B cell (primary cell): ENCODE measurements at regions of chr20 and their contacts with region 1.

Region 1: DNA sequence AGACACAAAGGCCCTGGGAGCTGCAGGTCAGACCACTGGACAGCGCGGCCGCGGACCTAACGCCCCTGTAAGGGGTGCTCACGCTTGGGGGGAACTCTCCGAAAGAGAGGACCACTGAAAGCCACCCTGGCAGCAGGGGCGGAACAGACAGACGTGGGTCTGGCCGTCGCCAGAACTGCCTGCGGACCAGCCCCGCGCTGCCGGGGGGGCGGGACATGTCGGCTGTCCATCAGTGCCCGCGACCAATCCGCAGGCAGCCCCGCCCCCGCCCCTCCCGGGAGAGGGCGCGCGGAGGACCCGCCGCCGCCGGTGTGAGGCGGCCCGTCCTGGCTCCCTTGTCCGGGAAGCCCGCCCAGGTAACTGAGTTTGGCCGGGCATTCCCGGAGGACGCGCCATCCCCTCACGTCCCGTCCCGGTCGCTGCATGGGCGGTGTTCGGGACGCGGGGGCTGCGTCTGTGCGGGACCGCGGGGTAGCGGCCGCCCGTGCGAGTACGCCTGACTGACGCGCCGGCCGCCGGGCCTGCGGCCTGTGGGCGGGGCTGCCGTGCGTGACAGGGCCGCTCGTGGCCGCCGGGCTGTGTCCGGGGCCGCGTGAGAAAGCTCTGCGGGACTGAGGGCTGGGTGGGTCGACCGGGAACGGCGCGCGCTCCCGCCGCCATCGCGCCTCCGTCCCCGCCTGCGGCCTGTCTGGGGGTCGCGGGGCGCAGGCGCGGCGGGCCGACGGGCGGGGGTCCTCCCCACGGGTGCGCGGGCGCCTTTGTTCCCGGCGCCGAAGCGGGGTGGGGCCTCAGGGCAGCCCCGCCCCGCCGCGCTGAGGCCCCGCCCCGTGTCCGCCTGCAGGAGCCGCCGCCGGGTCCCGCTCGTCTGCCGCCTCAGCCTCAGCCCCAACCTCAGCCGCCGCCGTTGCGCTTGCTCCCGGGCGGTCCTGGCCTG is at the start of gene PLCG1:
- DNase-seq: peak; percentile 89
- ATAC-seq: peak; percentile 75
- H3K4me3 ChIP-seq: peak within 1 kb of the TSS; percentile 7 to 83 (median 71)
- H3K4me3 Mint-ChIP-seq: peak within 1 kb of the TSS; percentile 93
- H3K27ac ChIP-seq: peak within 1 kb of the TSS; percentile 45 to 73
- H3K27ac Mint-ChIP-seq: peak within 1 kb of the TSS; percentile 91
- H3K4me1 ChIP-seq: peaks cover 43 to 62% of the 10 kb centered on the region in 2 donors
- H3K4me1 Mint-ChIP-seq: peaks cover 66% of the 10 kb centered on the region
- H3K27me3 ChIP-seq: no peaks in the 10 kb centered on the region
- H3K27me3 Mint-ChIP-seq: no peaks in the 10 kb centered on the region
- CTCF ChIP-seq: no peak
- total RNA-seq, gene PLCG1: 98.7 and 106 TPM in 2 replicates

Region 2: GRCh38 chr20:41149679-41150131 is 12.8 kb after region 1 on chr20:
- CTCF ChIA-PET with region 1: interaction called, 122 read pairs
- POLR2A ChIA-PET with region 1: interaction called, 7 read pairs
- intact Hi-C with region 1: no loop called
- DNase-seq: no peak
- ATAC-seq: no peak
- H3K4me3 ChIP-seq: no peak overlapping the region
- H3K4me3 Mint-ChIP-seq: no peak overlapping the region
- H3K27ac ChIP-seq: no peak overlapping the region
- H3K27ac Mint-ChIP-seq: no peak overlapping the region
- H3K4me1 ChIP-seq: peaks cover 28 to 38% of the 10 kb centered on the region in 2 donors
- H3K4me1 Mint-ChIP-seq: peaks cover 69% of the 10 kb centered on the region
- H3K27me3 ChIP-seq: no peaks in the 10 kb centered on the region
- H3K27me3 Mint-ChIP-seq: no peaks in the 10 kb centered on the region
- CTCF ChIP-seq: no peak

Region 3: DNA sequence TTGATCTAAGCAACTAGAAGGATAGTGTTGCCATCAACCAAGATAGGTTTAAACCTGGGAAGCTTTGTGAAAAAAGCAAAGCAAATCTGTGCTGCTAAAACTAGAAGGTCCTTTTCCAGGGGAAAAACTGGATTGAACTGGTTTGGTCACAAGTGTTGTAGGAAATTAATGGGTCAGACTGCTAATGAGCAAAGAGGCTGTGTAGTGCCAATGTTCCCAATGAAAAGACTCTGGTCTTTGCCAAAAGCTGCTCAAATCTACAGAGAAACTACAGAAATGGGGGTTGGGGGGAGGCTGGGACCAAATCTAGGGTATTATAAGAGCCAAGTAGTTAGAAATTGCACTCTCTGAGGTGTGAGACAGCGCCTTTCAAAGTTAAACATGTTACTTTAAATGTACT is 85.3 kb after region 1 on chr20:
- CTCF ChIA-PET with region 1: interaction called, 16 read pairs
- POLR2A ChIA-PET with region 1: no interaction called
- intact Hi-C with region 1: no loop called
- DNase-seq: no peak
- ATAC-seq: no peak
- H3K4me3 ChIP-seq: no peak overlapping the region
- H3K4me3 Mint-ChIP-seq: no peak overlapping the region
- H3K27ac ChIP-seq: no peak overlapping the region
- H3K27ac Mint-ChIP-seq: no peak overlapping the region
- H3K4me1 ChIP-seq: no peaks in the 10 kb centered on the region
- H3K4me1 Mint-ChIP-seq: peaks cover 4% of the 10 kb centered on the region
- H3K27me3 ChIP-seq: no peaks in the 10 kb centered on the region
- H3K27me3 Mint-ChIP-seq: no peaks in the 10 kb centered on the region
- CTCF ChIP-seq: no peak

Region 4: DNA sequence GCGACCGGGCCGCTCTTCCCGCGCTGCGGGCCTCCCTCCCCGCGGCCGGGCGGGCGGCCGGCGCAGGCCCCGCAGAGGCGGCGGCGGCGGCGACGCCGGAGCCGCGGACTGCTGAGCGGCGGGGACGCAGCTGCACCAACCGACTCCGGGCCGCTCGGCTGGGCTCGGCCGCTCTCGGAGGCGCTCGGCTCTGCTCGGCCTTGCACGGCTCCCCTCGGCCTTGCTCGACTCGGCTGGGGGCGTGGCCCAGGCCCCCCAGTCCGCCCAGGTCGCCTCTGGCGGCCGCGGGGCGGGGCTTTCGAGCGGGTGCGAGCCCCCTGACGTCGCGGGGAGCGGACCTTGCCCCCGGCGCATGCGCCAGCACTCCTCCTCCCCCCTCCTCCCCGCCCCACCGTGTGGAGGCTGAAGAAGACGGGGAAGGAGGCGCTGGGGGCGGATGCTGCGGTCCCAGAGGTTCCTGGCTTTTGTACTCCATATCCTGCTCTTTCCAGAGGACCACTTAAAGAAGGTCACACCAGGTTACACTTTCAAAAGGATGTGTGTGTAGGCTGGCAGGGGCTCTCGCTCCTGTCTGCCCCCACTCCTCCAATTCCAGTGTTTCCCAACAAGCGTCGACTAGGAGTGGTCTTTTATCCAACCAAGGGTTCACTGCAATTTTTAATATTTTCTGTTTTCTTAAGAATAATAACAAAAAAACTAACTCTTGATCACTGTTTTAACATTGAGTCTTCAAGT is 180.8 kb after region 1 on chr20 and contains the start of gene ZHX3:
- CTCF ChIA-PET with region 1: interaction called, 6 read pairs
- POLR2A ChIA-PET with region 1: interaction called, 5 read pairs
- intact Hi-C with region 1: loop called (anchors 1 kb)
- DNase-seq: peak; percentile 98
- ATAC-seq: peak; percentile 95
- H3K4me3 ChIP-seq: peak within 1 kb of the TSS in 4 of 5 experiments; percentile 65 to 86 (median 74)
- H3K4me3 Mint-ChIP-seq: peak within 1 kb of the TSS; percentile 91
- H3K27ac ChIP-seq: peak within 1 kb of the TSS; percentile 63 to 76
- H3K27ac Mint-ChIP-seq: peak within 1 kb of the TSS; percentile 91
- H3K4me1 ChIP-seq: peaks cover 11 to 12% of the 10 kb centered on the region in 2 donors
- H3K4me1 Mint-ChIP-seq: peaks cover 22% of the 10 kb centered on the region
- H3K27me3 ChIP-seq: no peaks in the 10 kb centered on the region
- H3K27me3 Mint-ChIP-seq: no peaks in the 10 kb centered on the region
- CTCF ChIP-seq: no peak
- total RNA-seq, gene ZHX3: 22.2 and 24.4 TPM in 2 replicates

Region 5: DNA sequence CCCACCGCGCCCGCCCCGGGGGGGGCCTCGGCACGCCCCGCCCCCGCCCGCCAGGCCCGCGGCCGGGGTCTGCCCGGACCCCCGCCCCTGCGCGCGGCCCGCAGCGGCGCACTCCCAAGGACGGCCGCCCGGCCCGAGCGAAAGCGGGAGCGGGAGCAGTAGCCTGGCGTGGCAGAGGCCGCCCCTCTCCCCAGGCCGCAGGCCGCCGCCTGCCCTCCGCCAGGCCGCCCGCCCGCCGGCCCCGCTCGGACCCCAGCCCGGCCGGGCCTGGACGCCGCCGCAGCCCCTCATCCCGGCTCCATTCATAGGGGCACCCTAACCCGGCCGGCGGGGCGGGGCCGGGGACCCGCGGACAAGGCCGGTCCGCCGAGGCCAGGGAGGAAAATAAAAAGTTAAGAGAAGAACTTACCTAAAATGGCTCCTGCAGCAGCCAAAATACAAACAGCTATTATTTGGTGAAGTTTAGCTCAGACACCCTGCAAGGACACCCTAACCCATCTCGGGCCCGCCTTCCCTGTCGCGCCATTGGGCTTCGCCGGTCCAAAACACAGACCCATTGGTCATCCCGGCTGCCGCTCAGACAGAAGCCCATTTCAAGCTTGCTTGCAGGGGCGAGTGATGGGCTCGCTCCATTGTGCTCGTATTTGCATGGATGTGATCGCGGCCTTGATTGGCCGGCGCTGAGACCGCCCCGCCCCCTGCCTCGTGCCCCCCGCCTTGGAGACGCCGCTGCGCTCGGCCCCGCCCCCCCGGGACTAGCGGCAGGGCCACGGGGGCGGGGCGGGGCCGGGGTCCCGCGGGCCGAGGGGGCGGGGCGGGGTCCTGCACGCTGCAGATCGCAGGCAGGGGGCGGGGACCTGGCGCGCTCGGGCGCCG is 481.2 kb after region 1 on chr20 and contains the start of gene CHD6:
- CTCF ChIA-PET with region 1: no interaction called
- POLR2A ChIA-PET with region 1: no interaction called
- intact Hi-C with region 1: loop called (anchors 2 kb)
- DNase-seq: peak; percentile 99
- ATAC-seq: peak; percentile 93
- H3K4me3 ChIP-seq: peak within 1 kb of the TSS; percentile 52 to 92 (median 72)
- H3K4me3 Mint-ChIP-seq: peak within 1 kb of the TSS; percentile 98
- H3K27ac ChIP-seq: peak within 1 kb of the TSS in 1 of 2 donors; percentile 57
- H3K27ac Mint-ChIP-seq: peak within 1 kb of the TSS; percentile 94
- H3K4me1 ChIP-seq: peaks cover 19 to 22% of the 10 kb centered on the region in 2 donors
- H3K4me1 Mint-ChIP-seq: peaks cover 42% of the 10 kb centered on the region
- H3K27me3 ChIP-seq: no peaks in the 10 kb centered on the region
- H3K27me3 Mint-ChIP-seq: no peaks in the 10 kb centered on the region
- CTCF ChIP-seq: no peak
- total RNA-seq, gene CHD6: 117 and 125 TPM in 2 replicates

Region 6: GRCh38 chr20:42392442-42392841 is 1255.5 kb after region 1 on chr20:
- CTCF ChIA-PET with region 1: no interaction called
- POLR2A ChIA-PET with region 1: no interaction called
- intact Hi-C with region 1: no loop called
- DNase-seq: no peak
- ATAC-seq: no peak
- H3K4me3 ChIP-seq: no peak overlapping the region
- H3K4me3 Mint-ChIP-seq: no peak overlapping the region
- H3K27ac ChIP-seq: no peak overlapping the region
- H3K27ac Mint-ChIP-seq: no peak overlapping the region
- H3K4me1 ChIP-seq: no peaks in the 10 kb centered on the region
- H3K4me1 Mint-ChIP-seq: no peaks in the 10 kb centered on the region
- H3K27me3 ChIP-seq: no peaks in the 10 kb centered on the region
- H3K27me3 Mint-ChIP-seq: no peaks in the 10 kb centered on the region
- CTCF ChIP-seq: no peak